ENCODE measurements at regions of chr17 and their contacts with region 1.

Region 1: GRCh38 chr17:39687811-39688518 is at the start of gene PGAP3:
- DNase-seq: peak; percentile 74 to 89 (median 82)
- H3K4me3 ChIP-seq: peak within 1 kb of the TSS; percentile 88
- H3K4me3 Mint-ChIP-seq: peak within 1 kb of the TSS; percentile 96 to 99 (median 97)
- H3K27ac ChIP-seq: peak within 1 kb of the TSS; percentile 78
- H3K27ac Mint-ChIP-seq: peak within 1 kb of the TSS; percentile 95 to 99 (median 97)
- H3K4me1 ChIP-seq: peaks cover 16% of the 10 kb centered on the region
- H3K4me1 Mint-ChIP-seq: peaks cover 29 to 36% (median 31%) of the 10 kb centered on the region in 3 donors
- H3K27me3 ChIP-seq: no peaks in the 10 kb centered on the region
- H3K27me3 Mint-ChIP-seq: no peaks in the 10 kb centered on the region
- total RNA-seq, gene PGAP3: 11.8 to 12.1 TPM

Region 2: GRCh38 chr17:39668199-39668966 is 19.6 kb before region 1 on chr17 and contains the start of gene PNMT:
- CTCF ChIA-PET with region 1: interaction called, 11 read pairs
- POLR2A ChIA-PET with region 1: interaction called, 6 read pairs
- DNase-seq: peak; percentile 49 to 76 (median 52)
- H3K4me3 ChIP-seq: peak within 1 kb of the TSS; percentile 37
- H3K4me3 Mint-ChIP-seq: peak within 1 kb of the TSS; percentile 7 to 88 (median 67)
- H3K27ac ChIP-seq: peak within 1 kb of the TSS; percentile 24
- H3K27ac Mint-ChIP-seq: peak within 1 kb of the TSS in 3 of 8 donors; percentile 46 to 88 (median 62)
- H3K4me1 ChIP-seq: peaks cover 6% of the 10 kb centered on the region
- H3K4me1 Mint-ChIP-seq: peaks cover 6 to 21% (median 6%) of the 10 kb centered on the region in 3 donors
- H3K27me3 ChIP-seq: no peaks in the 10 kb centered on the region
- H3K27me3 Mint-ChIP-seq: peaks cover 3 to 25% of the 10 kb centered on the region in 2 donors
- total RNA-seq, gene PNMT: not detected

Region 3: GRCh38 chr17:39980351-39981206 is 292.6 kb after region 1 on chr17 and contains the start of gene PSMD3:
- CTCF ChIA-PET with region 1: no interaction called
- POLR2A ChIA-PET with region 1: no interaction called
- DNase-seq: peak; percentile 95 to 99 (median 99)
- H3K4me3 ChIP-seq: peak within 1 kb of the TSS; percentile 86
- H3K4me3 Mint-ChIP-seq: peak within 1 kb of the TSS; percentile 89 to 96 (median 95)
- H3K27ac ChIP-seq: peak within 1 kb of the TSS; percentile 85
- H3K27ac Mint-ChIP-seq: peak within 1 kb of the TSS; percentile 90 to 98 (median 95)
- H3K4me1 ChIP-seq: peaks cover 28% of the 10 kb centered on the region
- H3K4me1 Mint-ChIP-seq: peaks cover 36 to 51% (median 49%) of the 10 kb centered on the region in 3 donors
- H3K27me3 ChIP-seq: no peaks in the 10 kb centered on the region
- H3K27me3 Mint-ChIP-seq: peaks cover 5 to 8% of the 10 kb centered on the region in 2 donors
- total RNA-seq, gene PSMD3: 185 to 186 TPM

Measured in CD8-positive, alpha-beta memory T cell (primary cell).